ENCODE measurements at regions of chr12 and their contacts with region 1.

Region 1: DNA sequence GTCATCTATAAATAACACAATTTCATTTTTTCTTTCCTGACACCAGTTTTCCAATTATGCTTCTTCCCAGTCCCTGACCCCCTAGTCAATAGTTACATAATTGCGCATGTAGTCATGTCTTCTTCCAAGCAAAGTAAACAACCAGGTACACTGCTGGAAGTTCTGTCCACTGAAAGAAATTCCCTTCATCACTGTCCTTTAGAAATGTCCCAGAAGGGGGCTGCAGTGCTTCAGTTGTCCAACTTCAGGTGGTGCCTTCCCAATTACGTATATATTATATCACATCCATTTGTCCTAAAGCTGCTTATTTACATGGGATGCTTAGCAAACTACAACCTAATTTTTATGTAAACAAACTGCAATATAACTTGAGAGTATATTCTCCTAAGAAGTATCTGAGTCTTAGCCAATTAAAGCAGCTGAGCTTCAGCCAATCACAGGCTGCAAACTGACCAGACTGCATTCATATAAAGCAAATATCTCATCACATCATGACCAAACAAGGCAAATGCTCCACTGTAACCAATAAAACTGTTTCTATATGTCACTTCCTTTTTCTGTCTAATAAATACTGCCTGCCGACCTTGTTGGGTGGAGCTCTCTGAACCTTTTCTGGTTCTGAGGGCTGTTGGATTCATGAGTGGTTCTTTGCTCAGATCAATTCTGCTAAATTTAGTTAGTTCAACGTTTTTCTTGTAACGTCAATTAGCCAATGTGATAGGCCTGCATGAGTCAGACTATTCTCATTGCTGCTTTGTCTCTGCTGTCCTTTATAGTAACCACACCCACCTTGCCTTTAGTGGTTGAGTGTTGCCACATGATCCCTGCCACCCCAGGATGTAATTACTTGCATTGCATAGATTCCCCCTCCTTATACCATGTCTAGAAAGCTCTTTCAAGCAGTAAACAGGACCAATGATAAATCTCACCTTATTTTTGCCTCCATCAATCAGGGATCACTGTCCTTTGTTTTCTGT is 239.3 kb downstream of the ALG10B start:
- DNase-seq: no peak
- H3K4me3 ChIP-seq: no peak overlapping the region
- H3K27ac ChIP-seq: no peak overlapping the region
- H3K4me1 ChIP-seq: no peaks in the 10 kb centered on the region
- H3K27me3 ChIP-seq: no peaks in the 10 kb centered on the region
- CTCF ChIP-seq: no peak
- POLR2A ChIP-seq: no peak

Region 2: DNA sequence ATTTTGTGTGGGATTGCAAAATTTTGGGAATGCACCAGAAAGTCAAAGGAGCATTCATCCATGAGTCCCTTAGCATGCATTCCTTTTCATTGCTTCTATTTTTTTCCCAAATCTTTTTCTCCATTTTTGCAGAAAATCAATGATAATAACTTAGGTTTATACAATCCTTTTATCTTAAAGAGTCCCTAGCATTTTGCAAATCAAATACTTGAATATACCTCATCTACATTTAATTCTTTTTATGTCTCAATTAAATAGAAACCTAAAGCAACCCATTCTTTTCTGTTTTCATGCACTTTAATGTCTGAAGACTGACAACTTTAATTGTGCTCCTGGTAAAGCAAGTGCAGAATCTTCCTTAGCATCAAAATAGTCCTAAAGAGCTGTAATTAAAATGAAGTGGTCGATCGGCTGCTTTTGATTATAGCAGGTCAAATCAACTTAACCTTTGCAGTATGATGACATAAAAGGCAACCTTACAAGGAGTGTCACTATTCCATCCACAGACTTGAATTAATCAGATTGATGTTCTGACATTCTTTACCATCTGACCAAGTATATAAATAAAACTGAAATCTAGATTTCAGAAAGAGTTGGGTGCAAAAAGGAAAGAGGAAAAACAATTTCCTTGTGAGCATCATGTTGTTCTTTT is 71.0 kb before region 1 on chr12:
- intact Hi-C with region 1: loop called (anchors 5 kb)
- DNase-seq: no peak
- H3K4me3 ChIP-seq: no peak overlapping the region
- H3K27ac ChIP-seq: no peak overlapping the region
- H3K4me1 ChIP-seq: no peaks in the 10 kb centered on the region
- H3K27me3 ChIP-seq: no peaks in the 10 kb centered on the region
- CTCF ChIP-seq: no peak
- POLR2A ChIP-seq: no peak

Measured in breast epithelium (tissue), 4 donors.